GM12878 (cell line): ENCODE measurements at regions of chr6 and their contacts with region 1.

Region 1: GRCh38 chr6:119147101-119148053 is 68.9 kb upstream of the FAM184A start:
- DNase-seq: peak; percentile 60
- ATAC-seq: peak; percentile 93
- H3K4me3 ChIP-seq: 0 out of 2 replicates have a peak overlapping the region, but pooled peaks have one; percentile 31
- H3K27ac ChIP-seq: peak overlapping the region; percentile 48; the same call in 1 of the 2 replicates
- H3K4me1 ChIP-seq: peaks cover 12% of the 10 kb centered on the region
- H3K27me3 ChIP-seq: no peaks in the 10 kb centered on the region; a peak in 2 of 4 replicates
- CTCF ChIP-seq: no peak
- EP300 ChIP-seq: peak in 1 of 2 experiments; percentile 43; a peak in 1 of 4 replicates
- POLR2A ChIP-seq: no peak
- RAD21 ChIP-seq: no peak

Region 2: GRCh38 chr6:118912646-118913045 is 234.7 kb before region 1 on chr6:
- CTCF ChIA-PET with region 1: no interaction called
- POLR2A ChIA-PET with region 1: no interaction called
- RAD21 ChIA-PET with region 1: no interaction called
- SMC1A ChIA-PET with region 1: no interaction called
- in situ Hi-C with region 1: no loop called
- intact Hi-C with region 1: no loop called
- DNase-seq: no peak
- ATAC-seq: no peak
- H3K4me3 ChIP-seq: no peak overlapping the region
- H3K27ac ChIP-seq: no peak overlapping the region
- H3K4me1 ChIP-seq: no peaks in the 10 kb centered on the region
- H3K27me3 ChIP-seq: no peaks in the 10 kb centered on the region
- CTCF ChIP-seq: no peak
- EP300 ChIP-seq: no peak
- POLR2A ChIP-seq: no peak
- RAD21 ChIP-seq: no peak

Region 3: GRCh38 chr6:119129148-119129967 is 18.0 kb before region 1 on chr6:
- CTCF ChIA-PET with region 1: interaction called, 41 read pairs
- POLR2A ChIA-PET with region 1: no interaction called
- RAD21 ChIA-PET with region 1: interaction called, 19 read pairs
- SMC1A ChIA-PET with region 1: interaction called, 9 read pairs
- in situ Hi-C with region 1: no loop called
- intact Hi-C with region 1: no loop called
- DNase-seq: no peak
- ATAC-seq: peak; percentile 95
- H3K4me3 ChIP-seq: no peak overlapping the region
- H3K27ac ChIP-seq: no peak overlapping the region
- H3K4me1 ChIP-seq: no peaks in the 10 kb centered on the region
- H3K27me3 ChIP-seq: no peaks in the 10 kb centered on the region; a peak in 1 of 4 replicates
- CTCF ChIP-seq: peak; percentile 72 to 81 (median 79)
- EP300 ChIP-seq: no peak
- POLR2A ChIP-seq: no peak
- RAD21 ChIP-seq: peak; percentile 87

Region 4: GRCh38 chr6:119313937-119314884 is 166.8 kb after region 1 on chr6:
- CTCF ChIA-PET with region 1: interaction called, 7 read pairs
- POLR2A ChIA-PET with region 1: interaction called, 3 read pairs
- RAD21 ChIA-PET with region 1: interaction called, 34 read pairs
- SMC1A ChIA-PET with region 1: interaction called, 15 read pairs
- in situ Hi-C with region 1: no loop called
- intact Hi-C with region 1: no loop called
- DNase-seq: peak; percentile 42
- ATAC-seq: peak; percentile 78
- H3K4me3 ChIP-seq: no peak overlapping the region; the same call in 1 of the 2 replicates
- H3K27ac ChIP-seq: peak overlapping the region; percentile 73
- H3K4me1 ChIP-seq: peaks cover 28% of the 10 kb centered on the region
- H3K27me3 ChIP-seq: no peaks in the 10 kb centered on the region
- CTCF ChIP-seq: no peak
- EP300 ChIP-seq: peak in 1 of 2 experiments; percentile 86; a peak in 1 of 4 replicates
- POLR2A ChIP-seq: peak; percentile 46; the same call in 1 of the 2 replicates
- RAD21 ChIP-seq: no peak

Region 5: GRCh38 chr6:119333707-119334295 is 186.4 kb after region 1 on chr6:
- CTCF ChIA-PET with region 1: interaction called, 36 read pairs
- POLR2A ChIA-PET with region 1: no interaction called
- RAD21 ChIA-PET with region 1: interaction called, 15 read pairs
- SMC1A ChIA-PET with region 1: interaction called, 24 read pairs
- in situ Hi-C with region 1: no loop called
- intact Hi-C with region 1: no loop called
- DNase-seq: no peak
- ATAC-seq: peak; percentile 61
- H3K4me3 ChIP-seq: no peak overlapping the region
- H3K27ac ChIP-seq: no peak overlapping the region
- H3K4me1 ChIP-seq: no peaks in the 10 kb centered on the region
- H3K27me3 ChIP-seq: no peaks in the 10 kb centered on the region
- CTCF ChIP-seq: peak; percentile 45 to 69 (median 57); a peak in 5 of 6 replicates
- EP300 ChIP-seq: no peak
- POLR2A ChIP-seq: no peak
- RAD21 ChIP-seq: peak; percentile 88

Region 6: DNA sequence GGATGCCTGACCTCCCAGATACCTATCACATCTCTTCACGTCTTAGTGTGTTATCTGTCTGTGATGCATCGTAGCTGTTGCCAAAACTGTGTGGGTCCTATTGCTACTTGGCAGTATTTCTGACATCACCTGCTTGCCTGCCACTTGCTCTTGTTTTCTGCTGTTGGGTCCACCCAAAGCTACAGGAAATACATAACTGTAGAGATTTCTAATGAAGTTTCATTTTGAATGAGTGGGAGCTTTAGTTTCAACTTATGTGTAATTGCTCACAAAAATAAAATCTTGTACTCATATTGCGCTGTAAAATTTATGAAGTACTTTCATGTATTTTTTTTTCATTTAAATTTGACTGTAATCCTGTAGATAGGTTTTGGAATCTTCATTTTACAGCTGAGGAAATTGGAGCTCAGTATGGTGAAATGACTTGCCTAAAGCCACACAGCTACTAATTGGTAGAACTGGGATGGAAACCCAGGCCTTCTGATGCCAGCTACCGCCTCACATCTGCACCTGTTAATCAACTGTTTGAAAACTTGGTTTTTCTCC is 315.8 kb after region 1 on chr6:
- CTCF ChIA-PET with region 1: interaction called, 4 read pairs
- POLR2A ChIA-PET with region 1: no interaction called
- RAD21 ChIA-PET with region 1: interaction called, 4 read pairs
- SMC1A ChIA-PET with region 1: no interaction called
- in situ Hi-C with region 1: no loop called
- intact Hi-C with region 1: loop called (anchors 5 kb)
- DNase-seq: peak; percentile 75
- ATAC-seq: peak; percentile 89
- H3K4me3 ChIP-seq: 0 out of 2 replicates have a peak overlapping the region, but pooled peaks have one; percentile 11
- H3K27ac ChIP-seq: peak overlapping the region; percentile 77
- H3K4me1 ChIP-seq: peaks cover 44% of the 10 kb centered on the region
- H3K27me3 ChIP-seq: no peaks in the 10 kb centered on the region
- CTCF ChIP-seq: no peak
- EP300 ChIP-seq: peak; percentile 64 to 81
- POLR2A ChIP-seq: no peak
- RAD21 ChIP-seq: no peak; the same call in 1 of the 2 replicates

Region 7: DNA sequence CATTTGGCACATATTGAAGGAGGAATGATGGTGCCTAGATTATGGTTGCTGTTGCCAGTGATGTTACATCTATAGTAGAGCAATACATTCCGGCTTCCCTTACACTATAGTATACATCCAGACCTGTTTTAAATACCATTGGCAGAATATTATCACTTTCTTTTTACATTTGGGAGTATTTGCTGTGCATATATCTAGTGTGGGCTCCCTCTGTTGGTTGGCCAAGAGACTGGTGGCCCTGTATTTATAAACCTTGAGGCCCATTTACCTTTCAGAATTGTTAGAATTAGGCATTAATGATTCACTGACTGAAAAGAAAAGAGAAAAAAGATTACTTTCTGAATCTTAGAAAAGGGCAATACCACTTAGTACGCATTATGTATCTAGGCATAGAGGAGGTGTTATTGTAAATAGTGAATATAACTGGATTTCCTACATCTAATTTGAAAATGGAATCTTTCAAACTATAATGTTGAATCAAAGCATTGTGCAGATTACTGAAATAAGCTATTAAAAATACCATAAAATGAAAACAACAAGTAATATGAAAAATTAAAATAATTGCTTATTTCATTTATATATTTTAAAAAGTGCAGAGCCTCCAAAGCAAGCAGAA is 831.0 kb after region 1 on chr6:
- CTCF ChIA-PET with region 1: interaction called, 50 read pairs
- POLR2A ChIA-PET with region 1: no interaction called
- RAD21 ChIA-PET with region 1: interaction called, 18 read pairs
- SMC1A ChIA-PET with region 1: interaction called, 4 read pairs
- in situ Hi-C with region 1: loop called (anchors 10 kb)
- intact Hi-C with region 1: loop called (anchors 2 kb)
- DNase-seq: no peak
- ATAC-seq: peak; percentile 80
- H3K4me3 ChIP-seq: no peak overlapping the region
- H3K27ac ChIP-seq: no peak overlapping the region
- H3K4me1 ChIP-seq: no peaks in the 10 kb centered on the region
- H3K27me3 ChIP-seq: no peaks in the 10 kb centered on the region
- CTCF ChIP-seq: peak; percentile 43 to 48 (median 48); a peak in 5 of 6 replicates
- EP300 ChIP-seq: no peak
- POLR2A ChIP-seq: no peak
- RAD21 ChIP-seq: peak; percentile 57